ENCODE measurements at regions of chr7 and their contacts with region 1.

Region 1: GRCh38 chr7:1225441-1226185 is 7.1 kb upstream of the UNCX start:
- DNase-seq: peak in 28 of 42 donors; percentile 15 to 73 (median 38)

Region 2: GRCh38 chr7:1412322-1413261 is 187.0 kb after region 1 on chr7:
- intact Hi-C with region 1: loop called (anchors 5 kb)
- DNase-seq: peak; percentile 40 to 92 (median 85)

Region 3: DNA sequence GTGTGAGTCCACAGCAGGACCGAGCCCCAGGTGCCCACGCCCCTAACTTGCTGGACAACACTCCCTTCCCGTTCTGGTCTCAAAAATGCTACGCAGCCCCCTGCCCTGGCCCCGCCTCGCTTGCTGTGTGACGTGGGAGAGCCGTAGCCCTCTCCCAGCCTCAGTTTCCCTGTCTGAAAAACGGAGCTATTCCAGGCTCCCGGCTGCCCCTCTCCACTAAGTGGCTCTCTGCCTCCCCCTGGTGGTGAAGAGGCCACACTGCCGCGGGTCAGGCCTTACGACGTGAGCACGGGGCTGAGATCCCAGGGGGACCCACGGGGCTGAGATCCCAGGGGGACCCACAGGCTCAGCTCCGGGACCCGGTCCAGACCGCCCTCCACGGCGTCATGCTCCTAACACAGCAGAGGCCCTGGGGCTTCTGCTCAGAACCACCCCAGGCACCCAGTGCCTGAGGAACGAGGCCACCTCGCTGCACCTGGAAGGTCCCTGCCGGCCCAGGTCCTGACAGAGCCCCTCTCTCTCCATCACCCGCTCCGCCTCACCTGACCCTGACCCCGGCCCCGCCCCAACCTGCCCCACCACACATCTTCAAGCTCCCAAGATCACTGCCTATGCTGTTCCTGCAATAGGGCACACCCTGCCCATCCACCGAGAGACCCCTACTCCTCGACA is 206.9 kb after region 1 on chr7:
- intact Hi-C with region 1: loop called (anchors 10 kb)
- DNase-seq: peak; percentile 35 to 91 (median 74)

Measured in head of caudate nucleus (tissue), 42 donors.